ENCODE measurements at regions of chr1 and their contacts with region 1.

Region 1: DNA sequence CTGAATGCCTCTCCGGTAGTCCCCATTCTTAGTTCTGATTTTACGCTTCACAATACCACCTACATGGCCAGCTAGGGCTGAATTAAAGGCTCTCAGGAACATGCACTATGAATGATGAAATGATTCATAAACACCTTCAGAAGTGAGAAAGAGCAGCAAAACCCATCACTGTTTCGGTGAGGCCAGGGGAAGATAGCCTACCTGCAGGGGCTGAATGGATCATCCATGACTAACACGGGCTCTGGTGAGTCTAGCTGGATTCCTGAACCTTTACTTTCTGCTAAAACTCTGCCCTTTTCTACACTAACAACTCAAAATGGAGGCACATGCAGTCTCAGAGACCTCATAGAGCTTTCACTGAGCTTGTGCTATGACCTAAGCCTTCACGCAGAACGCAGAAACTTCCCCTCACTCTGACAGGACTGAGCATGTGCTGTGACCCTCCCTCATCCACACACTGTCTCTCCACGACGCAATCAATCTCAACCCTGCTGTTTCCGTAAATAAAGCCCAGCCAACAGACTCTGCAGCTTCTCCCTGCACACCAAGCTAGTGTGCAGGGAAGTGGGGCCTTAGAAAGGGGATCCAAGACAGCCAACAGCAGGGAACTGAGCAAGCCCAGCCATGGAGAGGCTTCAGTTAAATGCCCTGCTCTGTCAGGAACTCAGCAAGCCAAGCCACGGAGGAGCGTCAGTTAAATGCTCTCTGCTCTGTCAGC is 207.8 kb downstream of the SLC45A1 start:
- DNase-seq: peak; percentile 94
- H3K4me3 ChIP-seq: peak overlapping the region; percentile 50 to 64 (median 54)
- H3K27ac ChIP-seq: peak overlapping the region; percentile 79 to 83 (median 80)
- H3K4me1 ChIP-seq: peaks cover 40 to 56% (median 49%) of the 10 kb centered on the region in 4 donors
- H3K27me3 ChIP-seq: no peaks in the 10 kb centered on the region
- CTCF ChIP-seq: no peak
- EP300 ChIP-seq: no peak
- POLR2A ChIP-seq: no peak

Region 2: DNA sequence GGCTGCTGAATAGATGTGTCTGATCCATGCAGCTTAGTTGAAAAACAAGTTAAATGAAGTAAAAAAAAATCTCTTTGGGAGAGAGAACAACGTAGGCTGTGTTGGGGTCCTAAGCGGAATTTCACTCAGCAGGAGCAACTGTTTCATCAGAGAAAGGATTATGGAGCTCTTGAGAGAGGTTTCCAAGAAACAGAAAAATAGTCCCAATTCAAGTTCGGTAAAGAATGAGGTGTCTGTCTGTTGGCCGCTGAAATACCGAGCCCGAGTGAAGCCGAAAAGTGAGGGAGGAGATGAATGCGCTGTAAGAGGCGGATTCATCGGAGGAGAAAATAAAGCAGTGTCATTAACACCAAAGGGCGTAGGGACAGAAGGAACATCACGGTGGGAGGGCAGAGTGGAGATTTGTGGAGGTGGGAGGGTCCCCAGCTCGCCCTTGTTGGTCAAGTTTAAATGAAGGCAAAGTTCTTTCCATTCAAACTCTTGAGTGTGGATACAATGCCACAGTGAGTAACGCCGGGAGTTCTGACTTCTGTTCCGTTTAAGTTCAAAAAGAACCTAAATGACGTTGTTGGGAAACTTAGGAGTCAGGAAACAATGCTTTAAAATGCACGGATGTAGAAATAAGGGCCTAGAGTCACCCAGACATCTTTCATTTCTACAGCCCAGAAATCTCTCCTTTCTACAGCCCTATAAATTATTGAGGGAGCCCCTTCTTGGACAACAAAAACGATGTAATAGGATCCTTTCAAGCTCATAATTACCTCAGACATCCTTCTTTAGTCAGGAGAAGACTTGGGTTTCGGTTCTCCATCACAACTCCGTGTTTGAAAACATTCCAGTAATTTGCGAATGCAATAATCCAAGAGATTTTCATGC is 223.4 kb before region 1 on chr1:
- intact Hi-C with region 1: no loop called
- DNase-seq: no peak
- H3K4me3 ChIP-seq: no peak overlapping the region
- H3K27ac ChIP-seq: no peak overlapping the region
- H3K4me1 ChIP-seq: peaks cover 0 to 8% (median 3%) of the 10 kb centered on the region in 4 donors
- H3K27me3 ChIP-seq: no peaks in the 10 kb centered on the region
- CTCF ChIP-seq: no peak
- EP300 ChIP-seq: no peak
- POLR2A ChIP-seq: no peak

Region 3: DNA sequence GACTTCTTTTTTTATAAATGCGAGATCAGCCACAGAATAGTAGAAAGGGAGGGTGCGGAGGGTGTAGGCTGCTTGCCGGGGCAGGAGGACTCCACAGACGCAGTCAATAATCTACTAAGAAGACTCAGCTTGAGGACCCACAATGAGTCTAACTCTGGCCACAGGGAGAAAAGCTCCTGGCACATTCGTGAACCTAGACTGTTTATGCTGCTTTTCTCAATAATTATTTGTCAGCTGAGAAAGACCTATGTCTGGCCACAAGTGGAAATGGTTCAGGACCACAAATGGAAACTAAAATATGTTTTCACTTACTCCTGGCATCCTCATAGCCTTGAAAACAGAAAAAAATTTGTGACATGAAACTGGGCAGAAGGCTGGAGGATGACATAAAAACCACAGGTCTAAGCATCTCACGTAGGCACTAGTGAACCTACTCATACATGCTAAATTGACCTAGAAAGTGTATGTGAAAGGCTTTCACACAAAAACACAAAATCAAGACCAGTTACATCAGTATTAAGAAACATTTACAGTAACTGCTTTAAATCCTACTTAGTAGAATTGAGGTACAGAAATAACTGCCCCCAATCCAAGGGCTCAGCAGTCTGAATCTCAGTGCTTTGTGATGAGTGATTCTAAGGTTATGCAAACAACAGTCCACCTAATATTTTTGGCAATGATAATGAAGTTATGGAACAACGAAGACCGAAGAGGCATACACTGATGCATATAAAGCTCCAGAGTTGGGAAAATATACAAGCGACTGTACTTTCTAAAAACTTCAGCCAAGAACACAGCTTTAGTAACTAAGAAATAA is 48.3 kb before region 1 on chr1:
- intact Hi-C with region 1: no loop called
- DNase-seq: peak; percentile 31
- H3K4me3 ChIP-seq: peak overlapping the region in 2 of 4 donors; percentile 11 to 22
- H3K27ac ChIP-seq: peak overlapping the region; percentile 51 to 65 (median 60)
- H3K4me1 ChIP-seq: peaks cover 14 to 71% (median 49%) of the 10 kb centered on the region in 4 donors
- H3K27me3 ChIP-seq: no peaks in the 10 kb centered on the region
- CTCF ChIP-seq: no peak
- EP300 ChIP-seq: no peak
- POLR2A ChIP-seq: no peak

Region 4: GRCh38 chr1:8510041-8510823 is 15.5 kb before region 1 on chr1:
- intact Hi-C with region 1: loop called (anchors 1 kb)
- DNase-seq: no peak
- H3K4me3 ChIP-seq: peak overlapping the region; percentile 22 to 38 (median 27)
- H3K27ac ChIP-seq: peak overlapping the region; percentile 72 to 83 (median 78)
- H3K4me1 ChIP-seq: peaks cover 17 to 41% (median 29%) of the 10 kb centered on the region in 4 donors
- H3K27me3 ChIP-seq: no peaks in the 10 kb centered on the region
- CTCF ChIP-seq: no peak
- EP300 ChIP-seq: no peak
- POLR2A ChIP-seq: no peak

Region 5: GRCh38 chr1:8598060-8598724 is 72.5 kb after region 1 on chr1:
- intact Hi-C with region 1: no loop called
- DNase-seq: no peak
- H3K4me3 ChIP-seq: peak overlapping the region; percentile 6 to 32 (median 31)
- H3K27ac ChIP-seq: peak overlapping the region; percentile 59 to 75 (median 60)
- H3K4me1 ChIP-seq: peaks cover 37 to 56% (median 52%) of the 10 kb centered on the region in 4 donors
- H3K27me3 ChIP-seq: no peaks in the 10 kb centered on the region
- CTCF ChIP-seq: peak; percentile 30 to 61 (median 39)
- EP300 ChIP-seq: no peak
- POLR2A ChIP-seq: no peak

Region 6: DNA sequence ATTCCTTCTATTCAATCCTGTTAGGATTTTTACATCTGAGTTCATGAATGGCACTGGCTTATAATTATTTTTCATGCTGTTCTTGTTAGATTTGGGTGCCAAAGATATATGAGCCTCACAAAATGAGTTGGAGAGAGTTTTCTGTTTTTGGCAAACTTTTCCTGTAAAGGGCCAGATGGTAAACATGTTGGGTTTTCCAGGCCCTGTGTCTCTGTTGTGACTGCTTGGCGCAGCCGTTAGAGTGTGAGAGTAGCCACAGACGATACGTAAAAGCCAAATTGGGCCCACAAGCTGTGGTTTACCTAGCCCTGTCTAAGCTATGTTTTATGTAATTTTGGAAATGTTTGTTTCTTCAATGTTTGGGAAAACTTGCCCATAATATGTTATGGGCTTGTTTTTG is 404.4 kb after region 1 on chr1:
- intact Hi-C with region 1: no loop called
- DNase-seq: no peak
- H3K4me3 ChIP-seq: no peak overlapping the region
- H3K27ac ChIP-seq: no peak overlapping the region
- H3K4me1 ChIP-seq: no peaks in the 10 kb centered on the region
- H3K27me3 ChIP-seq: no peaks in the 10 kb centered on the region
- CTCF ChIP-seq: no peak
- EP300 ChIP-seq: no peak
- POLR2A ChIP-seq: no peak

Measured in esophagus muscularis mucosa (tissue), 4 donors.